Testis (tissue), 5 donors: ENCODE measurements at regions of chr20 and their contacts with region 1.

Region 1: GRCh38 chr20:44733341-44734069 is 12.2 kb upstream of the KCNK15 start:
- DNase-seq: peak; percentile 83
- H3K4me3 ChIP-seq: no peak overlapping the region
- H3K27ac ChIP-seq: no peak overlapping the region
- H3K4me1 ChIP-seq: peaks cover 16% of the 10 kb centered on the region
- H3K27me3 ChIP-seq: no peaks in the 10 kb centered on the region
- CTCF ChIP-seq: peak; percentile 76 to 91 (median 89)
- POLR2A ChIP-seq: no peak

Region 2: GRCh38 chr20:44615169-44615791 is 118.2 kb before region 1 on chr20:
- intact Hi-C with region 1: no loop called
- DNase-seq: no peak
- H3K4me3 ChIP-seq: no peak overlapping the region
- H3K27ac ChIP-seq: peak overlapping the region in 1 of 2 donors; percentile 44
- H3K4me1 ChIP-seq: peaks cover 10% of the 10 kb centered on the region
- H3K27me3 ChIP-seq: no peaks in the 10 kb centered on the region
- CTCF ChIP-seq: no peak
- POLR2A ChIP-seq: no peak

Region 3: DNA sequence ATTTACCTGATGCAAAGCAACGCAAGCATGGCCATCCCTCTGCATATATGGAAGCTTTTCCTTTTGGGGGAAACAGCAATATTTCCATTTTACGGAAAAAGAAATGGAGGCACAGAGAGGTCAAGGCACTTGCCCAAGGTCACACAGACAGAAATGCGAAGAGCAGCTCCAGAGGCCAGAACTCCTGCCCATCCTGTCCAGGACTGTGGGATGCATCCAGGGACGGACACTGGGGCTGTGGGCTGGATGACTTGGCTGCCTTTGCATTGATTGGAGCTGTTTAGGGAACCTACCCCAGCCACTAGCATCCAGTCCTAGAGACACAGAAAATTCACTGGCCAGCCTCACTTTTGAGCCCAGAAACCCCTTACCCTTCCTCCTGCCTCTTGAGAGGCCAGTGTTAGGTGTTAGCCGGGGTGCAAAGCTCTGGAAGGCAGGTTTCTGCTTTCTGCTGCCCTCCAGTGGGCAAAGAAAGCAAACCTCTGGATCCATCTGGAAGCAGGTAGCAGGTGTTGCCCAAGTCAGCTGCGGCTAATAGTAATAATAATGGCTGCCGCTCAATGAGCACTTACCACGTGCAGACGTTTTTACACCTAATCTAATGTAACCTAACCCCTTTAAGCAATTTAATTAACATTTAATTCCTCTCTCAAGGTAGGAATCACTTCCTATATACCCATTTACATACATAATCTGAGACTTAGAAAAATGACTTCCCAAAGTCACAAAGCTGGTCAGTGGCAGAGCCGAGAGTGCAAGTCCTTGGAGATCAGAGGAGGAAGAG is 50.0 kb before region 1 on chr20:
- intact Hi-C with region 1: loop called (anchors 5 kb)
- DNase-seq: peak; percentile 67
- H3K4me3 ChIP-seq: no peak overlapping the region
- H3K27ac ChIP-seq: no peak overlapping the region
- H3K4me1 ChIP-seq: peaks cover 10% of the 10 kb centered on the region
- H3K27me3 ChIP-seq: no peaks in the 10 kb centered on the region
- CTCF ChIP-seq: peak; percentile 23 to 60 (median 34)
- POLR2A ChIP-seq: no peak